Mucosa of descending colon (tissue), 3 donors: ENCODE measurements at regions of chr11 and their contacts with region 1.

Region 1: GRCh38 chr11:6377902-6378639 is 12.2 kb upstream of the SMPD1 start:
- DNase-seq: no peak
- ATAC-seq: peak; percentile 54
- H3K4me3 ChIP-seq: no peak overlapping the region
- H3K4me1 ChIP-seq: peaks cover 3% of the 10 kb centered on the region
- CTCF ChIP-seq: no peak

Region 2: GRCh38 chr11:6443269-6444003 is 65.4 kb after region 1 on chr11:
- intact Hi-C with region 1: loop called (anchors 5 kb)
- DNase-seq: peak in 2 of 3 donors; percentile 64 to 72
- ATAC-seq: peak; percentile 86
- H3K4me3 ChIP-seq: no peak overlapping the region
- H3K4me1 ChIP-seq: no peaks in the 10 kb centered on the region
- CTCF ChIP-seq: peak; percentile 82

Region 3: GRCh38 chr11:6505577-6506240 is 127.6 kb after region 1 on chr11:
- intact Hi-C with region 1: loop called in 1 of 2 experiments (anchors 2 kb)
- DNase-seq: peak in 1 of 3 donors; percentile 70
- ATAC-seq: peak; percentile 79
- H3K4me3 ChIP-seq: no peak overlapping the region
- H3K4me1 ChIP-seq: no peaks in the 10 kb centered on the region
- CTCF ChIP-seq: peak; percentile 63

Region 4: GRCh38 chr11:6705905-6706535 is 327.9 kb after region 1 on chr11:
- intact Hi-C with region 1: no loop called
- DNase-seq: peak in 1 of 3 donors; percentile 75
- ATAC-seq: peak; percentile 73
- H3K4me3 ChIP-seq: no peak overlapping the region
- H3K4me1 ChIP-seq: no peaks in the 10 kb centered on the region
- CTCF ChIP-seq: peak; percentile 83

Region 5: DNA sequence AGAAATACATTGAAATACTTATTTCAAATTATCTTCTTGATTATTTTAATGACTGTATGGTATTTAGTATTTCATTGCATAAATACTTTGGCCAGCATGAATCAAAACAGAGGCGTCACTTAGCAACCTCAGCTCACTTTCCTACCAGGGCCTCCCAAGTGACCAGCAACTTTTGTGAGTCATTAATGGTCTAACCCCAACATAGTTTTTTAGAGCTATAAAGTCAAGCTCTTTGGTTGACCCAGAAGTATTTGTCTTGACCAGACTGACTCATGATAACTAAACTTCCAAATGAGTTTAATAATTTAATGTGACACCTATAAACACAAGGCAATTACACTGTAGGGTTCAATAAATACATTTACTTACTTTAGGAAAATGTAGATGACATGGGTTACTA is 682.8 kb after region 1 on chr11:
- intact Hi-C with region 1: no loop called
- DNase-seq: no peak
- ATAC-seq: no peak
- H3K4me3 ChIP-seq: no peak overlapping the region
- H3K4me1 ChIP-seq: no peaks in the 10 kb centered on the region
- CTCF ChIP-seq: no peak